B cell (primary cell): ENCODE measurements at regions of chr5 and their contacts with region 1.

Region 1: GRCh38 chr5:134184155-134185135 is 7.7 kb upstream of the SKP1 start:
- DNase-seq: peak; percentile 83
- ATAC-seq: peak; percentile 99
- H3K4me3 ChIP-seq: no peak overlapping the region
- H3K4me3 Mint-ChIP-seq: no peak overlapping the region
- H3K27ac ChIP-seq: no peak overlapping the region
- H3K27ac Mint-ChIP-seq: no peak overlapping the region
- H3K4me1 ChIP-seq: peaks cover 0 to 6% of the 10 kb centered on the region in 2 donors
- H3K4me1 Mint-ChIP-seq: peaks cover 5% of the 10 kb centered on the region
- H3K27me3 ChIP-seq: no peaks in the 10 kb centered on the region
- H3K27me3 Mint-ChIP-seq: no peaks in the 10 kb centered on the region
- CTCF ChIP-seq: peak; percentile 96

Region 2: DNA sequence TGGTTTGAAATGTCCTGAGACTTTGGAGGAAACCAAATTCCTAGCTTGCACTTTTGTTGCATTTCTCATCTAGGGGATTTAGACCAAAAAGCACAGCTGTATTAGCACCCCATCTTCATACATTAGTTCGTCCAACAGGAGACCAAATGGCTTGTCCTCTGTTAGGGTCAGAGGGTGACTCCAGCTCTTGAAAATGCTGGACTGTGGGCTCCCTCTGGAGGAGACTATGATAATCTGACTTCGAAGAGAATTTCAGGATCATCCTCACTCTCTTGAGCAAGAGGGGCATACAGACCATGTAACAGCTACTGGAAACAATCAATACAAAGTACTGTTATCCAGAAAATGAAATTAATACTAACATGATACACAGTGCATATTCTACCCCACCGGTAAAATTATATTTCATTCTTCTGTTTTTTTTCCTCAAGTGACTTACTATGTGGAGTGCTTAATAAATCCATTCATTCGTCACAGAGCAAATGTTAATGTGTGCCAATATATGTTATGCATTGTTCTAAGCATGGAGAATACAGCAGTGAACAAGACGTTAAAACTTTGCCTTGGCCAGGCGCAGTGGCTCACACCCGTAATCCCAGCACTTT is 105.2 kb after region 1 on chr5:
- CTCF ChIA-PET with region 1: interaction called, 120 read pairs
- POLR2A ChIA-PET with region 1: no interaction called
- intact Hi-C with region 1: loop called (anchors 1 kb)
- DNase-seq: peak; percentile 72
- ATAC-seq: peak; percentile 72
- H3K4me3 ChIP-seq: no peak overlapping the region
- H3K4me3 Mint-ChIP-seq: no peak overlapping the region
- H3K27ac ChIP-seq: no peak overlapping the region
- H3K27ac Mint-ChIP-seq: no peak overlapping the region
- H3K4me1 ChIP-seq: no peaks in the 10 kb centered on the region
- H3K4me1 Mint-ChIP-seq: no peaks in the 10 kb centered on the region
- H3K27me3 ChIP-seq: peaks cover 0 to 5% (median 0%) of the 10 kb centered on the region in 4 experiments
- H3K27me3 Mint-ChIP-seq: peaks cover 28% of the 10 kb centered on the region
- CTCF ChIP-seq: peak; percentile 63